Naive thymus-derived CD4-positive, alpha-beta T cell (primary cell): ENCODE measurements at regions of chr1 and their contacts with region 1.

Region 1: DNA sequence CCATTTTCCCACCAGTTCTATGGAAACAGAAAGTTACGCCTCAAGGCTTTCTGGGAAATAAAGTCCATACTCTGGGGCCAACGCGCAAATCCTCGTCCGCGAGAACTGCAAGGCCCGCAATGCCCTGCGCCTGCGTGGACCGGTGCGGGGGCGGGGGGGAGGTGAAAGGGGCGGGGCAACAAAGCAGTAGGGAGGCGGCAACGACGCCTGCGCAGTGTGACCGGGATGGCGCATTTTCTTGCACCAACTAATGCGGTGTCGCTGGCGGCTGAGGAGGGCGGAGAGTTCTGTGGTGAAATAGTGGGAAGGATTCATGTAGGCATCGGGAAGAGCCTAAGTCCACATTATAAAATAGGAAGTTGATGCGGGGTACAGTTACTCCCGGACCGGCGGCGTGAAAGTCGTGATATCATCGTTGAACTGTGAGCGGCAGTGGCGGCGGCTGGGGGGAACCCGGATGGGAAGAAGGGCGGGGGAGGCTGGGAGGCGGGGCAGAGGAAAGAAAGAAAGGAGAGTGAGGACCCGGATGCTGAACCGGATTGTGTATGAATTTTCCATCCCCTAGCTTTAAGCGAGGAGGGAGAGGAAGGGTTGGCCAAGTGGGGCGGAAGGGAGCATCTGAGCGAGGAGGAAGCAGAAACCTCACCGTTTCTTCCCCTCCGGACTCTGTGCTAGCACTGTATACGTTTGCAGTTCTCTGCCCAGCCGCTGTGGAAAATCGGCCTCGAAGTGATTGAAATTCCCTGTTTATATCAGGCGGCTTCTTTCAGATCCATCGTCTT is at the start of gene GGPS1:
- DNase-seq: peak; percentile 95 to 99 (median 97)
- ATAC-seq: peak; percentile 87
- H3K4me3 ChIP-seq: peak within 1 kb of the TSS; percentile 82
- H3K4me3 Mint-ChIP-seq: no peak within 1 kb of the TSS
- H3K27ac ChIP-seq: peak within 1 kb of the TSS; percentile 100
- H3K27ac Mint-ChIP-seq: peak within 1 kb of the TSS in 2 of 9 donors; percentile 91 to 94
- H3K4me1 ChIP-seq: peaks cover 40 to 54% of the 10 kb centered on the region in 2 donors
- H3K4me1 Mint-ChIP-seq: peaks cover 23 to 42% (median 31%) of the 10 kb centered on the region in 7 donors
- H3K27me3 ChIP-seq: no peaks in the 10 kb centered on the region
- H3K27me3 Mint-ChIP-seq: no peaks in the 10 kb centered on the region
- total RNA-seq, gene GGPS1: 26.5 to 51.7 (median 30.2) TPM

Region 2: GRCh38 chr1:234373064-234373958 is 955.2 kb before region 1 on chr1 and contains the start of gene COA6:
- CTCF ChIA-PET with region 1: no interaction called
- POLR2A ChIA-PET with region 1: interaction called, 4 read pairs
- intact Hi-C with region 1: loop called (anchors 1 kb)
- DNase-seq: peak; percentile 76 to 92 (median 90)
- ATAC-seq: peak; percentile 91
- H3K4me3 ChIP-seq: peak within 1 kb of the TSS; percentile 73
- H3K4me3 Mint-ChIP-seq: peak within 1 kb of the TSS; percentile 93 to 100 (median 97)
- H3K27ac ChIP-seq: peak within 1 kb of the TSS; percentile 95
- H3K27ac Mint-ChIP-seq: peak within 1 kb of the TSS; percentile 97 to 100 (median 99)
- H3K4me1 ChIP-seq: peaks cover 12 to 16% of the 10 kb centered on the region in 2 donors
- H3K4me1 Mint-ChIP-seq: peaks cover 30 to 66% (median 63%) of the 10 kb centered on the region in 7 donors
- H3K27me3 ChIP-seq: no peaks in the 10 kb centered on the region
- H3K27me3 Mint-ChIP-seq: no peaks in the 10 kb centered on the region
- total RNA-seq, gene COA6: 9.5 to 47.3 (median 18.5) TPM

Region 3: GRCh38 chr1:235011599-235012435 is 316.7 kb before region 1 on chr1:
- CTCF ChIA-PET with region 1: no interaction called
- POLR2A ChIA-PET with region 1: no interaction called
- intact Hi-C with region 1: loop called in 1 of 2 experiments (anchors 5 kb)
- DNase-seq: peak; percentile 71 to 95 (median 93)
- ATAC-seq: peak; percentile 95
- H3K4me3 ChIP-seq: peak overlapping the region; percentile 48
- H3K4me3 Mint-ChIP-seq: peak overlapping the region; percentile 72 to 84 (median 80)
- H3K27ac ChIP-seq: peak overlapping the region; percentile 91
- H3K27ac Mint-ChIP-seq: peak overlapping the region; percentile 91 to 98 (median 97)
- H3K4me1 ChIP-seq: peaks cover 27 to 34% of the 10 kb centered on the region in 2 donors
- H3K4me1 Mint-ChIP-seq: peaks cover 36 to 79% (median 67%) of the 10 kb centered on the region in 7 donors
- H3K27me3 ChIP-seq: no peaks in the 10 kb centered on the region
- H3K27me3 Mint-ChIP-seq: peaks cover 0 to 5% (median 0%) of the 10 kb centered on the region in 5 donors

Region 4: DNA sequence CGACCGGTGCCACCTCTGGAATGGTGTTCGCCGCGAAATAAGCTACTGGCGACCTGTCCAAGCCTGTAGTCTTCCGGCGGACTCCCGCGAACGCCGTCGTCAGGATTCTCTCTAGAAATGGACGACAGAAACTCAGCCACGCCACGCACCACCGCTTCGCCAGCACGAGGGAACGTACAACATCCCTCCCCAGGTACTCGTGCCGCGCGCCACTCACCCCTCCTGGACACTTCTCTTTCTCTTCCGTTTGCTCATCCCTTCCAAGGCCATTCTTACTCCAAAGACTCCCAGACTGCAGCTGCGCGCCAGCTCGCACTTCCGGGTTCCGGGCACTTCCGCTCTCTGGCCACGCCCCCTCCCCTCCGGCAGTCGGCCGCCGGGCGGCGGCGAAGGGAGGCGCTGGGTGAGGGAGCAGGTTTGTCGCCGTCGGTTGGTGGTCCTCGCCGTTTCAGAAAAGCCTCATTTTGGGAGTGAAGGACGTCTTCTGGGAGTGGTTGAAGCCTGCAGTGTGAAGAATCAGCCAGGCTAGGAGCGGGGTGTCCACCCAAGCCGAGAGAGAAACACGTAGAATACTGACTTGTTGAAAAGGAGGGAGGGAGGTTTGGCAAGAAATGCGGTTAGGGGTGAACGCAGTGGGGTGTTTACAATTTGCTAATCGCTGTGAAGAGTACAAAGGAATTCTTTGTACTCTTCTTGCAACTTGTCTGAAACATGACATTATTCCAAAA is 167.4 kb before region 1 on chr1 and contains the start of gene RBM34:
- CTCF ChIA-PET with region 1: no interaction called
- POLR2A ChIA-PET with region 1: interaction called, 6 read pairs
- intact Hi-C with region 1: loop called (anchors 1 kb)
- DNase-seq: peak; percentile 87 to 95 (median 91)
- ATAC-seq: peak; percentile 96
- H3K4me3 ChIP-seq: peak within 1 kb of the TSS; percentile 92
- H3K4me3 Mint-ChIP-seq: peak within 1 kb of the TSS in 8 of 10 donors; percentile 96 to 100 (median 98)
- H3K27ac ChIP-seq: peak within 1 kb of the TSS; percentile 86
- H3K27ac Mint-ChIP-seq: peak within 1 kb of the TSS; percentile 97 to 100 (median 99)
- H3K4me1 ChIP-seq: peaks cover 30 to 33% of the 10 kb centered on the region in 2 donors
- H3K4me1 Mint-ChIP-seq: peaks cover 8 to 30% (median 17%) of the 10 kb centered on the region in 7 donors
- H3K27me3 ChIP-seq: no peaks in the 10 kb centered on the region
- H3K27me3 Mint-ChIP-seq: no peaks in the 10 kb centered on the region
- total RNA-seq, gene RBM34: 105 to 171 (median 137) TPM

Region 5: GRCh38 chr1:235304549-235305451 is 23.7 kb before region 1 on chr1:
- CTCF ChIA-PET with region 1: no interaction called
- POLR2A ChIA-PET with region 1: interaction called, 13 read pairs
- intact Hi-C with region 1: loop called in 1 of 2 experiments (anchors 2 kb)
- DNase-seq: peak in 7 of 9 donors; percentile 26 to 68 (median 39)
- ATAC-seq: peak; percentile 88
- H3K4me3 ChIP-seq: peak overlapping the region; percentile 3
- H3K4me3 Mint-ChIP-seq: peak overlapping the region; percentile 48 to 74 (median 58)
- H3K27ac ChIP-seq: peak overlapping the region; percentile 71
- H3K27ac Mint-ChIP-seq: peak overlapping the region; percentile 28 to 93 (median 79)
- H3K4me1 ChIP-seq: peaks cover 41 to 43% of the 10 kb centered on the region in 2 donors
- H3K4me1 Mint-ChIP-seq: peaks cover 37 to 71% (median 51%) of the 10 kb centered on the region in 7 donors
- H3K27me3 ChIP-seq: no peaks in the 10 kb centered on the region
- H3K27me3 Mint-ChIP-seq: no peaks in the 10 kb centered on the region

Region 6: DNA sequence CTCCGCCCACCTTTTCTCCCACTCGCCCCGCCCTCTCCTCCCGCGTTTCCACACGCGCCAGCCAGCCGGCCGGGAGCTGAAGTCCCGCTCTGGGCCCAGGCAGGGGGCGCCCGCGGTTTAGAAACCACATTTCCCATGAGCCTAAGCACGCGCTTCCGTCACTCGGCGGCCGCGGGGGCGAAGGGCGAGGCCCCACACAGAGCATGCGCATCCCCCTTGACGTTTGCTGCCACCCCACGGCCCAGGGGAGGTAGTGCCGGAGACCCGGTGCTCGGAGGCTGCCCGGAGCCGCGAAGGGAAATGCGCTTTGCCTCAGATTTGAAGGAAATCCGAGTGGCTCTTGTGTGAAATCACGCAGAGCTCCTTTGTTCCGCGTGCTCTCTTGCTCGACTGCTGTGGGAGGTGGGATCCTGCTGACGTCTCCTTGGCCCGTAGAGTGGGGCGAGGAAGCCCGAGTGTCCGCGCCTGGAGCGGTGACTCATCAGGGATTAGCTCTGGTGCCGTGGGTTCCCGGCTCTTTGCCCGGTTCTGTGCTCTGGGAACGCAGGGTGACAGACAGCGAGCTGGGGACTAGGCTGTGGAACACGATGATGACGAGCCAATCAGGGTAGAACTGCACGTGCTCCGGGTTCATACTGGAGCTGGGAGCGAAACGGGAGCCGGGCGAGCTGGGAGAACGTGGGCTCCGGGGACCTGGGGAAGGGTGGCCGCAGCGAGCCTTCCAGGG is 176.1 kb after region 1 on chr1:
- CTCF ChIA-PET with region 1: no interaction called
- POLR2A ChIA-PET with region 1: no interaction called
- intact Hi-C with region 1: loop called (anchors 1 kb)
- DNase-seq: peak; percentile 95 to 99 (median 98)
- ATAC-seq: peak; percentile 93
- H3K4me3 ChIP-seq: peak overlapping the region; percentile 93
- H3K4me3 Mint-ChIP-seq: peak overlapping the region; percentile 83 to 98 (median 96)
- H3K27ac ChIP-seq: peak overlapping the region; percentile 90
- H3K27ac Mint-ChIP-seq: peak overlapping the region; percentile 94 to 98 (median 97)
- H3K4me1 ChIP-seq: peaks cover 0 to 9% of the 10 kb centered on the region in 2 donors
- H3K4me1 Mint-ChIP-seq: peaks cover 4 to 28% (median 20%) of the 10 kb centered on the region in 7 donors
- H3K27me3 ChIP-seq: no peaks in the 10 kb centered on the region
- H3K27me3 Mint-ChIP-seq: peaks cover 0 to 9% (median 0%) of the 10 kb centered on the region in 5 donors

Region 7: DNA sequence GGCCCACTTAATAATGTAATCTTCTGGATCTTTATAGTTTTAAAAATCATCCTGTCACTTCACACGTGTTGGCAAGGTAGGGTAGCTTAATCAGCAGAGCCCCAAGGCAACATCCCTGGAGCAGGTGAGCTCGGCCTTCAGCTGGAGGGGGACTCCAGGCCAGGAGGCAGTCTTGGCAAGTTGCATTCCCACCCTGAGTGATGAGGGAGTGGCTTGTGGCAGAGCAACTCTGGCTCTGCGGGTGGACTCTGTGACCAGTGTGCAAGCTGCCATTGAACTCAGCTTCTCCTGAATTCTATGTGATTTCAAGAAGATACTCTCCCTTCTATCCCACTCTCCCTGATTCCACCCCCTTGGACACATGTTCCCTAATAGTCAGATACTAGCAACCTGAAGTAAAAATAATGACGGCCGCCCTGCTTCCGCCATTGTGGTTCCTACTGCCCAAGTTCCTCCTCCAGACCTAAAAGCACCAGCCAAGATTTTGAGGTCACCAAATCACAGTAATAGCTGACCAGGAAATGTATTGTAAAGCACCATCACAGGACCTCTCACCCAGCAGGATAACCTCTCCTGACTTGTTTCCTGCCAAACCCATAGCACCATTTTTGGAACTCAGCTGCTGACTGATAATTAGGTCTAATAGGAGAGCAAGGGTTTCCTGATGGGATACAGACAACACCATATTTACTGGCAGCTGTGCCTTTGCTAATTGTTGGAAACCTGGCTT is 549.7 kb after region 1 on chr1:
- CTCF ChIA-PET with region 1: no interaction called
- POLR2A ChIA-PET with region 1: no interaction called
- intact Hi-C with region 1: no loop called
- DNase-seq: no peak
- ATAC-seq: peak; percentile 30
- H3K4me3 ChIP-seq: no peak overlapping the region
- H3K4me3 Mint-ChIP-seq: no peak overlapping the region
- H3K27ac ChIP-seq: no peak overlapping the region
- H3K27ac Mint-ChIP-seq: peak overlapping the region in 2 of 9 donors; percentile 14 to 30
- H3K4me1 ChIP-seq: peaks cover 9 to 11% of the 10 kb centered on the region in 2 donors
- H3K4me1 Mint-ChIP-seq: peaks cover 9 to 70% (median 21%) of the 10 kb centered on the region in 7 donors
- H3K27me3 ChIP-seq: no peaks in the 10 kb centered on the region
- H3K27me3 Mint-ChIP-seq: peaks cover 0 to 3% (median 0%) of the 10 kb centered on the region in 5 donors

Region 8: GRCh38 chr1:236281654-236282424 is 953.3 kb after region 1 on chr1 and contains the start of gene ERO1B:
- CTCF ChIA-PET with region 1: no interaction called
- POLR2A ChIA-PET with region 1: no interaction called
- intact Hi-C with region 1: loop called in 1 of 2 experiments (anchors 5 kb)
- DNase-seq: peak; percentile 95 to 99 (median 97)
- ATAC-seq: peak; percentile 98
- H3K4me3 ChIP-seq: peak within 1 kb of the TSS; percentile 83
- H3K4me3 Mint-ChIP-seq: peak within 1 kb of the TSS; percentile 80 to 97 (median 94)
- H3K27ac ChIP-seq: peak within 1 kb of the TSS; percentile 82
- H3K27ac Mint-ChIP-seq: peak within 1 kb of the TSS; percentile 80 to 96 (median 95)
- H3K4me1 ChIP-seq: peaks cover 7 to 34% of the 10 kb centered on the region in 2 donors
- H3K4me1 Mint-ChIP-seq: peaks cover 29 to 82% (median 57%) of the 10 kb centered on the region in 7 donors
- H3K27me3 ChIP-seq: no peaks in the 10 kb centered on the region
- H3K27me3 Mint-ChIP-seq: peaks cover 0 to 10% (median 0%) of the 10 kb centered on the region in 5 donors
- total RNA-seq, gene ERO1B: 5.0 to 26.8 (median 16.0) TPM

Region 9: GRCh38 chr1:236332092-236332758 is 1003.7 kb after region 1 on chr1:
- CTCF ChIA-PET with region 1: no interaction called
- POLR2A ChIA-PET with region 1: no interaction called
- intact Hi-C with region 1: no loop called
- DNase-seq: no peak
- ATAC-seq: no peak
- H3K4me3 ChIP-seq: no peak overlapping the region
- H3K4me3 Mint-ChIP-seq: no peak overlapping the region
- H3K27ac ChIP-seq: no peak overlapping the region
- H3K27ac Mint-ChIP-seq: no peak overlapping the region
- H3K4me1 ChIP-seq: no peaks in the 10 kb centered on the region
- H3K4me1 Mint-ChIP-seq: no peaks in the 10 kb centered on the region
- H3K27me3 ChIP-seq: no peaks in the 10 kb centered on the region
- H3K27me3 Mint-ChIP-seq: peaks cover 0 to 3% (median 0%) of the 10 kb centered on the region in 5 donors